CD4-positive, alpha-beta memory T cell (primary cell): ENCODE measurements at regions of chr22 and their contacts with region 1.

Region 1: GRCh38 chr22:36775964-36776669 is at the start of gene IFT27:
- DNase-seq: peak; percentile 96 to 100 (median 99)
- H3K4me3 ChIP-seq: peak within 1 kb of the TSS; percentile 51 to 64
- H3K4me3 Mint-ChIP-seq: peak within 1 kb of the TSS; percentile 89 to 97 (median 92)
- H3K27ac ChIP-seq: peak within 1 kb of the TSS; percentile 73
- H3K27ac Mint-ChIP-seq: peak within 1 kb of the TSS; percentile 93 to 99 (median 98)
- H3K4me1 ChIP-seq: peaks cover 17% of the 10 kb centered on the region
- H3K4me1 Mint-ChIP-seq: peaks cover 16 to 32% (median 24%) of the 10 kb centered on the region in 4 donors
- H3K27me3 ChIP-seq: no peaks in the 10 kb centered on the region
- H3K27me3 Mint-ChIP-seq: no peaks in the 10 kb centered on the region
- total RNA-seq, gene IFT27: 38.2 to 42.6 TPM

Region 2: DNA sequence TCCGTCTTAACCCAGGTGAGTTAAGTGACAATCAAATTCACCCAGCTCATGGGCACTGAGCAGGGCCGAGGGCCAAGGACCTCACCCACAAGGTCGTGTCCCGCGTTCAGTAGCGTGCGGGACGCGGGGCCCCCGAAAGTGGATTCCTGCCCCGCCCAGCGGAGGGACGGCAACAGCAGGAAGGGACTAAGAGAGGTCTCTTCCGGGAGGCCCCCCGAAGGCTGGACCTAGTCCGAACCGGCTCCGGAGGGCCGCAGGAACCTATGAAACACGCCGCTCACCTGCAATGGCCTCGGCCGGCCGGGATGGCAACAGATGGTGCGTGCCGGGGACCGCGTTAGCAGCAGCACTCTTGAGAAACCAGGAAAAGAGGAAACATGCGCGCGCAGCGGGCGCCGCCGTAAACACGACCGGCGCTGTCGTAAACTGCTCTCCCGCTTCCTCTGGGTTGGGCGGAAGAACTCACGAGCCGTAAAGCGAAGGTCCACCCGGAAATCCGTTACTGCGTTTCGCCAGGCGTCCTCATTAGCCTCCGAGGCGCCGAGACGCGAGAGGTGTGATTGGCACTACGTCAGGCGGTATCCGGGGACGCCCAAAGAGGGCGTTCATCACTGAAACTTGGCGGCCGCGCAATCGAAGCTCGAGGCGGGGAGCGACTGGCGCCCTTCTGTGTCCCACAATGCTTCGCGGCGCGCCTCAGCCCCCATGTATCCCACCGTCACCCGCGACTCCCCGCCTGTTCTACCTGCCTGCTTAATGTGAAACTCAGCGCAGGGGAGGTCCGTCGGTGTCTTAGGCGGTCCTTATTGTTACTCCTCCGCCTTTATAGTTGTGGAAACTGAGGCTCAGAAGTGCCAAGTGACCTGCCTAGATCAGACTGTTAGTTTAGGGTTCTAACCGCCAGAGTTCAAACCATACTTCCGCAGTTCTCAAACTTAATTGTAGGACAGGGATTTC is 247.0 kb before region 1 on chr22 and contains the start of gene EIF3D:
- CTCF ChIA-PET with region 1: no interaction called
- POLR2A ChIA-PET with region 1: interaction called, 11 read pairs
- intact Hi-C with region 1: loop called (anchors 1 kb)
- DNase-seq: peak; percentile 98 to 100 (median 99)
- H3K4me3 ChIP-seq: peak within 1 kb of the TSS; percentile 79 to 94
- H3K4me3 Mint-ChIP-seq: peak within 1 kb of the TSS; percentile 89 to 97 (median 95)
- H3K27ac ChIP-seq: peak within 1 kb of the TSS; percentile 87
- H3K27ac Mint-ChIP-seq: peak within 1 kb of the TSS; percentile 95 to 99 (median 99)
- H3K4me1 ChIP-seq: peaks cover 20% of the 10 kb centered on the region
- H3K4me1 Mint-ChIP-seq: peaks cover 11 to 30% (median 16%) of the 10 kb centered on the region in 4 donors
- H3K27me3 ChIP-seq: no peaks in the 10 kb centered on the region
- H3K27me3 Mint-ChIP-seq: peaks cover 1% of the 10 kb centered on the region in 2 donors
- total RNA-seq, gene EIF3D: 222 to 228 TPM

Region 3: GRCh38 chr22:36741204-36741793 is 34.8 kb before region 1 on chr22:
- CTCF ChIA-PET with region 1: no interaction called
- POLR2A ChIA-PET with region 1: no interaction called
- intact Hi-C with region 1: no loop called
- DNase-seq: no peak
- H3K4me3 ChIP-seq: no peak overlapping the region
- H3K4me3 Mint-ChIP-seq: no peak overlapping the region
- H3K27ac ChIP-seq: no peak overlapping the region
- H3K27ac Mint-ChIP-seq: no peak overlapping the region
- H3K4me1 ChIP-seq: no peaks in the 10 kb centered on the region
- H3K4me1 Mint-ChIP-seq: no peaks in the 10 kb centered on the region
- H3K27me3 ChIP-seq: no peaks in the 10 kb centered on the region
- H3K27me3 Mint-ChIP-seq: peaks cover 12 to 19% of the 10 kb centered on the region in 2 donors

Region 4: GRCh38 chr22:36757668-36758211 is 18.4 kb before region 1 on chr22:
- CTCF ChIA-PET with region 1: interaction called, 52 read pairs
- POLR2A ChIA-PET with region 1: interaction called, 5 read pairs
- intact Hi-C with region 1: no loop called
- DNase-seq: peak; percentile 56 to 71 (median 64)
- H3K4me3 ChIP-seq: no peak overlapping the region
- H3K4me3 Mint-ChIP-seq: no peak overlapping the region
- H3K27ac ChIP-seq: no peak overlapping the region
- H3K27ac Mint-ChIP-seq: no peak overlapping the region
- H3K4me1 ChIP-seq: peaks cover 5% of the 10 kb centered on the region
- H3K4me1 Mint-ChIP-seq: peaks cover 2 to 13% (median 5%) of the 10 kb centered on the region in 4 donors
- H3K27me3 ChIP-seq: peaks cover 4% of the 10 kb centered on the region
- H3K27me3 Mint-ChIP-seq: peaks cover 6 to 8% of the 10 kb centered on the region in 2 donors

Region 5: DNA sequence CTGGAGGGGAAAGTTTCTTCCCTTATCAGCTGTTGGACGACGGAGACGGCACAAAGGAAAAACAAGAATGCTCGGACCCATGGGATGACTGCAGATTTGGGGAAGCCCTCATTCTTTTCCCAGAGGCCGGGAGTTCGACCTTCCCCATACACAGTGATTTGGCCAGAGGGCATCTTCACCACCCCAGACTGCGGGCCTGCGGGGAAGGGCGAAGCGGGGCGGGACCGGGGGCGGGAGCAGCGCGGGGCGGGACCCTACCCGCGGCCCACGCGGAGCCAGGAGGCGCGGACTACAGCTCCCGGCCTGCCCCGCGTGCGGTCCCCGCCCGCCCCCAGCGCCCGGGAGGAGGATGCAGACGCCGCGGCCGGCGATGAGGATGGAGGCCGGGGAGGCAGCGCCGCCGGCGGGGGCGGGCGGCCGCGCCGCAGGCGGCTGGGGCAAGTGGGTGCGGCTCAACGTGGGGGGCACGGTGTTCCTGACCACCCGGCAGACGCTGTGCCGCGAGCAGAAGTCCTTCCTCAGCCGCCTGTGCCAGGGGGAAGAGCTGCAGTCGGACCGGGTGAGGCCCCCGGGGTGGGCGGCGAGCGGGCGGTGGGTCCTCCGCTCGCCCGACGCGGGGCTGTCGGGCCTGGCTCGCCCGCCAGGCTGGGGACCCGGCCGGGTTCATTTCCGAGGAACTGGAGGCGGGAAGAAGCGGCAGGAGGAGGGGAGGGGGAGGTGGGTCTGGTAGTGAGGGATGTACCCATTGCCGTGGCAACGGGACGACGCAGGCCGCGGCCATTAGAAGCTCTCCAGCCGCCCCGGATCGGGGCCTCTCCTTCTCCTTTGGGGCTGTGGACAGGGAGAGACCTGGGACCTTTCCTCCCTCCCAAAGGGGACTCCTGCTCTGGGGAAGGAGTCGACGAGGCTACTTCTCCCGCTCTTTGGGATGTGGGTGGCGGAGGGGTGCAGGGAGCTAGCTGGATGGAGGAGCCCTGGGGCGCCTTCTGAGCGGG is 275.6 kb after region 1 on chr22 and contains the start of gene KCTD17:
- CTCF ChIA-PET with region 1: no interaction called
- POLR2A ChIA-PET with region 1: no interaction called
- intact Hi-C with region 1: loop called (anchors 1 kb)
- DNase-seq: peak; percentile 58 to 72 (median 68)
- H3K4me3 ChIP-seq: peak within 1 kb of the TSS; percentile 17 to 60
- H3K4me3 Mint-ChIP-seq: peak within 1 kb of the TSS; percentile 82 to 90 (median 84)
- H3K27ac ChIP-seq: peak within 1 kb of the TSS; percentile 70
- H3K27ac Mint-ChIP-seq: peak within 1 kb of the TSS; percentile 53 to 93 (median 82)
- H3K4me1 ChIP-seq: peaks cover 14% of the 10 kb centered on the region
- H3K4me1 Mint-ChIP-seq: peaks cover 4 to 20% (median 13%) of the 10 kb centered on the region in 4 donors
- H3K27me3 ChIP-seq: no peaks in the 10 kb centered on the region
- H3K27me3 Mint-ChIP-seq: no peaks in the 10 kb centered on the region
- total RNA-seq, gene KCTD17: 32.3 to 33.4 TPM